ENCODE measurements at regions of chrX and their contacts with region 1.

Region 1: DNA sequence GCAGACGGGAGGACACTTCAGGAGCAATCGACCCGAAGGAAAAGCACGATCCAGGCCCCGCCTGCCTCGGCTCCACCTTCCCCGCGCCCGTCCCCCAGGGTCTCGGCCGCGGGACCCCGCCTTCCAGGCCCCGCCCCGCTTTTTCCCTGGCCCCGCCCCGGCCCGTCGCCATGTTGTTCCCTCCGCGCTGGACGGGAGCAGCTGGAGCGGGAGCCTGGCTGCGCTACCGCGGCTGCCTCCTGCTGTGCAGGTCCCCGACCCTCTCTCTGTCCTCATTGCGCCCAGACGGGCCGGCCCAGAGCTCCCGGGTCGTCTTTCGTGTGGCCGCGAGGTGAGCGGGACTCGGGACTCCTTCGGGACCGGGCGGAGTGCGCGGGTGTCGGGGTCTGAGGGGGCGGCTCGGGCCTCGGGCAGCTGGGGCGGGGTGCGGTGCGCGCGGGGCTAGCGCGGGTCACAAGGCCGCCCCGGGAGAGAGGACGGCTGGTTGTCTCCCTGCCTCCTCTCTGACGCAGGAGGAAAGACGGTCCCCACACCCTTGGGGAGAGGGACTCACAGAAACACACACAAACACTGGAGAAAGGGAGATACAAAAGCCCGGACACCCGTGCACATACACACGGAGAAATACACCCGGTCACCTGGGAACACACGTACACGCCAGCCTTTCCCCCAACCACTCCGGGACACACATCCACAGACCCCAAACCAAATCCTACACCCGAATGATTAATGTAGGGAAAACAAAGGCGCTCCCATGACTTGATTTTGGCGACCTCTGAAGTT is at the start of gene RAB9A:
- DNase-seq: peak; percentile 77
- ATAC-seq: peak; percentile 86
- H3K4me3 Mint-ChIP-seq: peak within 1 kb of the TSS; percentile 91
- H3K27ac Mint-ChIP-seq: peak within 1 kb of the TSS; percentile 89
- H3K4me1 Mint-ChIP-seq: peaks cover 61% of the 10 kb centered on the region
- H3K27me3 Mint-ChIP-seq: no peaks in the 10 kb centered on the region
- CTCF ChIP-seq: no peak
- total RNA-seq, gene RAB9A: 26.1 and 27.7 TPM in 2 replicates

Region 2: GRCh38 chrX:13522811-13523210 is 166.3 kb before region 1 on chrX:
- CTCF ChIA-PET with region 1: no interaction called
- POLR2A ChIA-PET with region 1: no interaction called
- intact Hi-C with region 1: no loop called
- DNase-seq: no peak
- ATAC-seq: no peak
- H3K4me3 Mint-ChIP-seq: no peak overlapping the region
- H3K27ac Mint-ChIP-seq: no peak overlapping the region
- H3K4me1 Mint-ChIP-seq: no peaks in the 10 kb centered on the region
- H3K27me3 Mint-ChIP-seq: no peaks in the 10 kb centered on the region
- CTCF ChIP-seq: no peak

Region 3: DNA sequence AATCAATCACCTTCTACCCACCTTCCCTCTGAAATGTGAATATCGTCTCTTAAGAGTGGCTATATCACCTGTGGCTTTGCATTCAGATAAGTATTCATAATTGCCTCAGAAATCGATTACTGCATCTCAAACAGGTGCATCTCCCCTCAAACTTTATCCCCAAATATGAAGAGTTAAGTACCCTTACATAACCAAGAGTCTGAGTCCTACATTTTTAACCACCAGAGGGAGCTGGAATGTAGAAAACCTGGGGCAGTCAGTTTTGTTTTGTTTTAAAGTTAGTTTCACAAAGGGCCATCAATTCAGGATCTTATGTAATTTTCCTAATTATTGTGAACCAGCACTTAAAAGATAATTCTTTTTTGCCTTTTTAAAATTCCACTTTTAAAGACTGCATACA is 30.5 kb before region 1 on chrX:
- CTCF ChIA-PET with region 1: interaction called, 4 read pairs
- POLR2A ChIA-PET with region 1: interaction called, 6 read pairs
- intact Hi-C with region 1: loop called (anchors 1 kb)
- DNase-seq: no peak
- ATAC-seq: peak; percentile 37
- H3K4me3 Mint-ChIP-seq: no peak overlapping the region
- H3K27ac Mint-ChIP-seq: peak overlapping the region; percentile 46
- H3K4me1 Mint-ChIP-seq: peaks cover 14% of the 10 kb centered on the region
- H3K27me3 Mint-ChIP-seq: no peaks in the 10 kb centered on the region
- CTCF ChIP-seq: no peak

Region 4: DNA sequence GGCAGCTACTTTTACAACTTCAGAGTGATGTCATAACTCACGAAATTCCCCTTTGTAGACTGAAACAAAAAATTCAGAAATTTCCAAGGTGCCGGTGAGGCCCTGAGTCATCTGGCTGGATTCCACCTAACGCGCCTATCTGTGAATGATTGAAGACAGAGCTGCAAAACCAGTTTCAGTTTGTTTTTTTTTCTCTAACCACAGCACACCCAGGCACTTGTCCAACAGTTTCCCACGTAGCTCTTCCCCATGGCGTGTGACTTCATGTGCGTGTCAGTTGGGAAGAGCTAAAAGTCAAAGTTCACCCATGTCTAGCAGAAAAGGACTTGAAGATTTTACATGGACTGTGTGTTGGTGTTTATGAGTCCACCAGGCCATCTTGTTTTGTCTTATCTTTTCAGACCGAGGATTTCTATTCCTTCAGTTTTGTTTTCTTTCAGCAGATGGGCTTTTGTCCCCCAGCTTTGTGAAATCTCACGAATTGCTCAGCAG is 19.9 kb before region 1 on chrX:
- CTCF ChIA-PET with region 1: interaction called, 4 read pairs
- POLR2A ChIA-PET with region 1: interaction called, 55 read pairs
- intact Hi-C with region 1: loop called (anchors 1 kb)
- DNase-seq: no peak
- ATAC-seq: peak; percentile 85
- H3K4me3 Mint-ChIP-seq: peak overlapping the region; percentile 66
- H3K27ac Mint-ChIP-seq: peak overlapping the region; percentile 87
- H3K4me1 Mint-ChIP-seq: peaks cover 24% of the 10 kb centered on the region
- H3K27me3 Mint-ChIP-seq: no peaks in the 10 kb centered on the region
- CTCF ChIP-seq: no peak

Region 5: GRCh38 chrX:13676885-13677284 is 12.3 kb before region 1 on chrX:
- CTCF ChIA-PET with region 1: no interaction called
- POLR2A ChIA-PET with region 1: interaction called, 55 read pairs
- intact Hi-C with region 1: no loop called
- DNase-seq: no peak
- ATAC-seq: no peak
- H3K4me3 Mint-ChIP-seq: no peak overlapping the region
- H3K27ac Mint-ChIP-seq: peak overlapping the region; percentile 24
- H3K4me1 Mint-ChIP-seq: peaks cover 14% of the 10 kb centered on the region
- H3K27me3 Mint-ChIP-seq: no peaks in the 10 kb centered on the region
- CTCF ChIP-seq: no peak

Region 6: DNA sequence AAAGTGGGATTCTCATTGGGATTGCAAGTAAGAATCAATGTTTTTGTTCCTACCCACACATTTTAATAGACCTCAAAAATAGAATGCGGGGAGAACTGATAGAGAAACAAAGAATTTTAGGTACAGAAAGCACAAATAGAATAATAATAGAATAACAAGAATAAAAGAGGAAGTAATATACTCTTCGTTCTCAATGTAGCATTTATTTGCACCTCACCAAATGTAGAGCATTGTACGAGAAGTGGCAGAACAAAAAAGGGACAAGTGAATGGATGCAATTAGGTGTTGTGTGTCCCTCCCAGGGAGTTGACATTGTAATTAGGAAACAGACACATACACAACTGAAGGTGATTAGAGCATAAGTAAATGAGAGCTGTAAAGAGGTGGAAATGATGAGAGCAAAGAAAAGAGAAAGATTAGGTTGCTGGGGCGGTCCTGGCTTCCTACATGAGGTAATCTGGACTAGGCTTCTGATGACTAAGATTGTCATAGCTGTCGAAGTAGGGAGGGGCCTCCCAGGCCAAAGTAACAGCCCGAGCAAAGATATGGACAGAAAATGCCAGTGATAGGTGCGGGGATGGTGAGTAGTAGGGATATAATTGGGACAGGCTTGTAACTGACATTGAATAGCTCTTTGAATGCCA is 10.2 kb after region 1 on chrX:
- CTCF ChIA-PET with region 1: no interaction called
- POLR2A ChIA-PET with region 1: interaction called, 13 read pairs
- intact Hi-C with region 1: loop called (anchors 1 kb)
- DNase-seq: no peak
- ATAC-seq: peak; percentile 45
- H3K4me3 Mint-ChIP-seq: peak overlapping the region; percentile 64
- H3K27ac Mint-ChIP-seq: peak overlapping the region; percentile 83
- H3K4me1 Mint-ChIP-seq: peaks cover 84% of the 10 kb centered on the region
- H3K27me3 Mint-ChIP-seq: no peaks in the 10 kb centered on the region
- CTCF ChIP-seq: no peak